Lower leg skin (tissue), 4 donors: ENCODE measurements at regions of chr22 and their contacts with region 1.

Region 1: GRCh38 chr22:30634471-30635233 is 929 bp upstream of the SLC35E4 start:
- DNase-seq: peak; percentile 86 to 98
- H3K4me3 ChIP-seq: no peak overlapping the region
- CTCF ChIP-seq: peak in 2 of 3 donors; percentile 54 to 98
- POLR2A ChIP-seq: no peak

Region 2: DNA sequence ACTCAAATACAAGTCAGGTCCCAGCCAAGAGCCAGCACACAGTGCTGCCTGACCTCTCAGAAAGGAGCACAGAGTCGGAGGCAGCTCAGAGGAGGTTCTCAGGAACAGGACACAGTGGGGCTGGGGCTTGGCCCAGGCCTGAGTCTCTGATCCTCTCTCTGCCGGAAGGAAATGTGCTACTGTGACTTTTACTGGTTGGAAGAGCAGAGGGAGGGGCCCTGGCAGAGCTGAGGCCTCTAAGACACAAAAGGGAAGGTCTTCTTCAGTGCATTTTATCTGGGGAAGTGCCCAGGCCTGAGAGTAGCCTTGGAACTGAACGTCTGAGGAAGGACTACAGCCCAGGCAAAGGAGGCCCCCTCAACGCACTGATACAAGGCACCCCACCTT is 329.1 kb before region 1 on chr22:
- intact Hi-C with region 1: no loop called
- DNase-seq: peak; percentile 76 to 92
- H3K4me3 ChIP-seq: no peak overlapping the region
- CTCF ChIP-seq: no peak
- POLR2A ChIP-seq: no peak

Region 3: GRCh38 chr22:30754971-30755756 is 120.5 kb after region 1 on chr22:
- intact Hi-C with region 1: loop called (anchors 2 kb)
- DNase-seq: peak in 1 of 2 donors; percentile 33
- H3K4me3 ChIP-seq: no peak overlapping the region
- CTCF ChIP-seq: no peak
- POLR2A ChIP-seq: no peak

Region 4: GRCh38 chr22:30920407-30920806 is 285.8 kb after region 1 on chr22:
- intact Hi-C with region 1: loop called (anchors 10 kb)
- DNase-seq: peak; percentile 47 to 93
- H3K4me3 ChIP-seq: no peak overlapping the region
- CTCF ChIP-seq: peak in 1 of 3 donors; percentile 44
- POLR2A ChIP-seq: no peak

Region 5: GRCh38 chr22:31148953-31149627 is 514.4 kb after region 1 on chr22:
- intact Hi-C with region 1: loop called (anchors 10 kb)
- DNase-seq: peak in 1 of 2 donors; percentile 40
- H3K4me3 ChIP-seq: no peak overlapping the region
- CTCF ChIP-seq: peak in 2 of 3 donors; percentile 31 to 86
- POLR2A ChIP-seq: no peak